Thyroid gland (tissue), 4 donors: ENCODE measurements at regions of chr18 and their contacts with region 1.

Region 1: DNA sequence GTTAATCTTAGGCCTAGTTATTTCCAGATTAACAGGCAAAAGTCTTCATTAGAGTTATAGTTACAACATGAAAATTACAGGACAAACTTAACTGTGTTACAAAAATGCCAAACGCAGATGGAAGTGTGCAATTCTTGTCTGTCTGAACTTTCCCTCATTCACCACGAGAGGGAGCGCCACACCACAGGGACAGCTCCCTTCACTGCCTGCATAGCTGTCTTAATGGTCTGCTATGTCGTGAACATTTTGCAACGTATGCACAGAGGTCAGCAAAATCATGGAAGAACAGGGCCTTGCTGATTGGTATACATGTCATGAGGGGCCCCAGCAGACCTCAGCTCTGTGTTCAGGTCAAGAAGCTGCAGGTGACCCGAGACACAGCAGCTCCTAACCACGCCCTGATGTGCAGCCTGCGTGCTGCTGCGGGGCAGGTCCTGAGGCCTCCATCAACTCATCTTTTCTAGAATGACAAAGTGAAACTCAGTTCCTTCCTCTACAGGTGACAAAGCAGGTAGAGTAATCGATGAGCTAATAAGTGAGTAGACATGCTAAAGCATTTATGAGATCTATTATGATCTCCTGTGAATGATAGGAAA is 78.8 kb upstream of the ATP8B1 start:
- DNase-seq: peak; percentile 67 to 79
- H3K4me3 ChIP-seq: no peak overlapping the region
- H3K27ac ChIP-seq: no peak overlapping the region
- H3K4me1 ChIP-seq: no peaks in the 10 kb centered on the region
- H3K27me3 ChIP-seq: no peaks in the 10 kb centered on the region
- CTCF ChIP-seq: peak; percentile 80 to 96 (median 91)
- POLR2A ChIP-seq: no peak

Region 2: GRCh38 chr18:58124475-58124874 is 242.6 kb after region 1 on chr18:
- intact Hi-C with region 1: loop called (anchors 5 kb)
- DNase-seq: no peak
- H3K4me3 ChIP-seq: no peak overlapping the region
- H3K27ac ChIP-seq: no peak overlapping the region
- H3K4me1 ChIP-seq: peaks cover 7 to 13% of the 10 kb centered on the region in 2 donors
- H3K27me3 ChIP-seq: no peaks in the 10 kb centered on the region
- CTCF ChIP-seq: no peak
- POLR2A ChIP-seq: no peak

Region 3: GRCh38 chr18:58493516-58494253 is 611.8 kb after region 1 on chr18:
- intact Hi-C with region 1: loop called (anchors 10 kb)
- DNase-seq: peak; percentile 76 to 86
- H3K4me3 ChIP-seq: no peak overlapping the region
- H3K27ac ChIP-seq: no peak overlapping the region
- H3K4me1 ChIP-seq: no peaks in the 10 kb centered on the region
- H3K27me3 ChIP-seq: no peaks in the 10 kb centered on the region
- CTCF ChIP-seq: peak; percentile 63 to 86 (median 74)
- POLR2A ChIP-seq: no peak